ENCODE measurements at regions of chr21 and their contacts with region 1.

Region 1: GRCh38 chr21:41641821-41642701 is 124.8 kb downstream of the RIPK4 start:
- DNase-seq: peak; percentile 97
- H3K4me3 ChIP-seq: no peak overlapping the region
- H3K27ac ChIP-seq: peak overlapping the region; percentile 97
- H3K4me1 ChIP-seq: peaks cover 42% of the 10 kb centered on the region
- H3K27me3 ChIP-seq: no peaks in the 10 kb centered on the region
- CTCF ChIP-seq: no peak

Region 2: DNA sequence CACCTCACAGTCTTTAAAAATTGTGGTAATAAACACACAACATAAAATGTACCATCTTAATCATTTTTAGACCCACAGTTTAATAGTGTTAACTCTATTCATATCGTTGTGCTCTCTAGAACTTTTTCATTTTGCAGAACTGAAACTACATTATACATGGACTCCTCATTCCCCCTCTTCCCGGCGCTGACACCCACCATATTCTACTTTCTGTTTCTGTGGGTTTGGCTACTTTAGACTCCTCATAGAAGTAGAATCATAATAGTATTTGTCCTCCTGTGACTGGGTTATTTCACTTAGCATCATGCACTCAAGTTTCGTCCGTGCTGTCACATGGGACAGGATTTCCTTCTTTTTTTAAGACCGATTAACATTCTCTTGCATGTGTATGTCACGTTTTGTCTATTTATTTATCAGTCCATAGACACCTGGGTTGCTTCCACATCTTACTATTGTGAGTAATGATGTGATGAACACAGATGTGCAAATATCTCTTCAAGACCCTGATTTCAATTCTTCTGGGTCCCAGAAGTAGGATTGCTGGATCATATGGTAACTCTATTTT is 71.2 kb before region 1 on chr21:
- CTCF ChIA-PET with region 1: no interaction called
- dilution Hi-C with region 1: no loop called
- in situ Hi-C with region 1: no loop called
- intact Hi-C with region 1: no loop called
- DNase-seq: no peak
- H3K4me3 ChIP-seq: no peak overlapping the region
- H3K27ac ChIP-seq: no peak overlapping the region
- H3K4me1 ChIP-seq: no peaks in the 10 kb centered on the region
- H3K27me3 ChIP-seq: no peaks in the 10 kb centered on the region
- CTCF ChIP-seq: no peak

Region 3: GRCh38 chr21:41671859-41672532 is 29.9 kb after region 1 on chr21:
- CTCF ChIA-PET with region 1: no interaction called
- dilution Hi-C with region 1: no loop called
- in situ Hi-C with region 1: no loop called
- intact Hi-C with region 1: no loop called
- DNase-seq: no peak
- H3K4me3 ChIP-seq: no peak overlapping the region
- H3K27ac ChIP-seq: no peak overlapping the region
- H3K4me1 ChIP-seq: peaks cover 23% of the 10 kb centered on the region
- H3K27me3 ChIP-seq: no peaks in the 10 kb centered on the region
- CTCF ChIP-seq: no peak

Region 4: GRCh38 chr21:41768437-41769061 is 126.5 kb after region 1 on chr21:
- CTCF ChIA-PET with region 1: interaction called, 10 read pairs
- dilution Hi-C with region 1: no loop called
- in situ Hi-C with region 1: no loop called
- intact Hi-C with region 1: no loop called
- DNase-seq: peak; percentile 87
- H3K4me3 ChIP-seq: peak overlapping the region; percentile 87 to 94 (median 92)
- H3K27ac ChIP-seq: peak overlapping the region; percentile 95
- H3K4me1 ChIP-seq: peaks cover 28% of the 10 kb centered on the region
- H3K27me3 ChIP-seq: no peaks in the 10 kb centered on the region
- CTCF ChIP-seq: peak; percentile 24 to 47

Measured in mammary epithelial cell (primary cell).